Aorta (tissue), 5 donors: ENCODE measurements at regions of chr6 and their contacts with region 1.

Region 1: DNA sequence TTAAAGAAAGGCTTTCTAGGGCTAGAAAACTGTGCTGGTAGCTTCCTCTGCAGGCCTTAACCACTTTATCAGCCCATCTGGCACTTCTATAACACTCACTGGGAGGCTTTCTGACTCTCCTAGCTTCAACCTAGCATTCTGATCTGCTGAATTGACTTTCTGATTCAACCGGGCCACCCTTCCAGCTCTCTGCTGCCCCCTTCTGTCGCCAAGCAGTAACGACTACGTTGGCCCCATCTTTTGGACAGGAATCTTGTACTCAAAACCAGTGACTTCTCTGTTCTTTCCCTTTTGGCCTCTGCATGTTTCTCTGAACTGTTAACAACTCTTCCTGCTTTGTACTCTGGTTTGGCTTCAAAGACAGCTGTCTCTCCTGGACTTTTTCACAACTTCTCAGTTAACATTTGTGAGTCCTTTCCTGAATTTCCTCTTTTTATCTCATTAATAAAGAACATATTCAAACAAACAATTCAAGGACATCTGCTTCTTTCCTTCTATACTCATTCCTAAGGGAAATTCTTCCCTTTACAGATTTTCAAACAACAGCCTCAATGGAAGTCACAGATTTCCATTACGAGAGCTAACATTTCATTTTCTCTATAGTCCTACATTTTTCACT is 43.9 kb upstream of the FAM135A start:
- DNase-seq: peak; percentile 66 to 86
- ATAC-seq: peak; percentile 87
- H3K4me3 ChIP-seq: no peak overlapping the region
- H3K27ac ChIP-seq: no peak overlapping the region
- H3K4me1 ChIP-seq: no peaks in the 10 kb centered on the region
- H3K27me3 ChIP-seq: no peaks in the 10 kb centered on the region

Region 2: DNA sequence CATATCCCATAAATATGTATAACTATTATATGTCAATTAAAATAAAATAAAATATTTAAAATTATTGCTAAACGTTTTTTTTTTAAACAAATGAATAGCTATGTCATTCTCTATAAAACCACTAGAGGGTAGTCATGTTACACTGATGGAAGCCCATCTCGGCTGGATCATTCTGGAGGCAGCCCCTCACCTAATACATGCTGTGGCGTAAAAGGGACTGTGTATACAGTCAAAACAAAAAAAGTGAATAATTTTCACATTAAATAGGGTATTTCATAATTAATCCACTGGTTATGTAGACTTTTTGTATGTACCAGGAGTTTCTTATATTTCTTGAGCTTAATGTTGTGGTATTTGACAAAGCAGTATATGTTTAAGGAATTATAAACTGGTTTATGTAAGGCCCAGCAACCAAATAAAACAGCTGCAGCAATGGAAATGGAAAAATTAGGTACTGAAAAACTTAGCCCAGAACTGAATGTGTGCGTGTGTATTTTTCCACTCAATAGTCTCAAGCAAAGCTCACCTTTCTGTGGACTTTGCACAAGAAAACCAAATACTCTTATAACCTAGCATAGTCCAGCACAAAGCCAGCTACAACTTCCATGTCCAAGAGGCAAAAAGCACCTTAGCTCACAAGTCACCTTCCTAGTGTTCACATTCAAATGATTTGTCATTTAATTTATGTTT is 148.3 kb before region 1 on chr6:
- intact Hi-C with region 1: loop called (anchors 5 to 10 kb)
- DNase-seq: no peak
- ATAC-seq: no peak
- H3K4me3 ChIP-seq: no peak overlapping the region
- H3K27ac ChIP-seq: no peak overlapping the region
- H3K4me1 ChIP-seq: no peaks in the 10 kb centered on the region
- H3K27me3 ChIP-seq: no peaks in the 10 kb centered on the region

Region 3: GRCh38 chr6:70310063-70310694 is 59.3 kb before region 1 on chr6:
- intact Hi-C with region 1: loop called in 1 of 2 experiments (anchors 5 kb)
- DNase-seq: no peak
- ATAC-seq: no peak
- H3K4me3 ChIP-seq: no peak overlapping the region
- H3K27ac ChIP-seq: no peak overlapping the region
- H3K4me1 ChIP-seq: no peaks in the 10 kb centered on the region
- H3K27me3 ChIP-seq: no peaks in the 10 kb centered on the region

Region 4: GRCh38 chr6:70327036-70327435 is 42.4 kb before region 1 on chr6:
- intact Hi-C with region 1: no loop called
- DNase-seq: no peak
- ATAC-seq: no peak
- H3K4me3 ChIP-seq: no peak overlapping the region
- H3K27ac ChIP-seq: no peak overlapping the region
- H3K4me1 ChIP-seq: no peaks in the 10 kb centered on the region
- H3K27me3 ChIP-seq: peaks cover 0 to 3% of the 10 kb centered on the region in 2 donors

Region 5: DNA sequence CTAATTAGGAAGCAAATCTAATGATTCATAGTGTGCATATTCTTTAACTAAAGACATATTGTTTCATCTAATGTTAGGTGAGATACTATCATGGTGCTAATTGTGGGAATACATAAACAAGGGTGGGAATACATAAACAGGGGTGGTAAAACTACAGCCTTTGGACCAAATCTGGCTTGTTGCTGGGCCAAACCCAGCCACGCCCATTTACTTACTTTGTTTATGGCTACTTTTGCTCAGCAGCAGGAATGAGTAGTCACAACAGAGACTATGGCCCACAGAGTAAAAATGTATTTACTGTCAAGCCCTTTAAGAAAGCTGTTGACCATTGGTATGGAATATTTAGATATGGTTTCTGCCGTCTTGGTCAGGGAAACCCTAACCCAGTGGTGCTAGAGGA is 75.6 kb after region 1 on chr6:
- intact Hi-C with region 1: no loop called
- DNase-seq: no peak
- ATAC-seq: no peak
- H3K4me3 ChIP-seq: no peak overlapping the region
- H3K27ac ChIP-seq: no peak overlapping the region
- H3K4me1 ChIP-seq: no peaks in the 10 kb centered on the region
- H3K27me3 ChIP-seq: no peaks in the 10 kb centered on the region

Region 6: DNA sequence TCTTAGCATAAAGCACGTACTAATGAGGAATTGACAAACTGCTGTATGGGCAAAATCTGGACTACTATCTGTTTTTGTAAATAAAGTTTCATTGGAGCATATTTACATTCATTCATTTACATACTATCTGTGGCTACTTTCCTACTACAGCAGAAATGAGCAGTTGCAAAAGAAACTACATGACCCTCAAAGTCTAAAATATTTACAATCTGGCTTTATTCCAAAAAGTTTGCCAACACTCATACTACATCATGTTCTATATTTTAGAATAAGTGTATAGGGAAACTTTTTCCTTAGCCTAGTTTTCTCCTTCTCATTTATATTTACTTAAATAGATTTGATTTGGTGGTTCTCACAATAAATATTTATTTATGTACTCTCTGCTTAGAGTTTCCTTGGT is 1725.1 kb after region 1 on chr6:
- intact Hi-C with region 1: no loop called
- DNase-seq: no peak
- ATAC-seq: no peak
- H3K4me3 ChIP-seq: no peak overlapping the region
- H3K27ac ChIP-seq: no peak overlapping the region
- H3K4me1 ChIP-seq: no peaks in the 10 kb centered on the region
- H3K27me3 ChIP-seq: no peaks in the 10 kb centered on the region